Right ventricle myocardium superior (tissue), 1 donor: ENCODE measurements at regions of chr4 and their contacts with region 1.

Region 1: DNA sequence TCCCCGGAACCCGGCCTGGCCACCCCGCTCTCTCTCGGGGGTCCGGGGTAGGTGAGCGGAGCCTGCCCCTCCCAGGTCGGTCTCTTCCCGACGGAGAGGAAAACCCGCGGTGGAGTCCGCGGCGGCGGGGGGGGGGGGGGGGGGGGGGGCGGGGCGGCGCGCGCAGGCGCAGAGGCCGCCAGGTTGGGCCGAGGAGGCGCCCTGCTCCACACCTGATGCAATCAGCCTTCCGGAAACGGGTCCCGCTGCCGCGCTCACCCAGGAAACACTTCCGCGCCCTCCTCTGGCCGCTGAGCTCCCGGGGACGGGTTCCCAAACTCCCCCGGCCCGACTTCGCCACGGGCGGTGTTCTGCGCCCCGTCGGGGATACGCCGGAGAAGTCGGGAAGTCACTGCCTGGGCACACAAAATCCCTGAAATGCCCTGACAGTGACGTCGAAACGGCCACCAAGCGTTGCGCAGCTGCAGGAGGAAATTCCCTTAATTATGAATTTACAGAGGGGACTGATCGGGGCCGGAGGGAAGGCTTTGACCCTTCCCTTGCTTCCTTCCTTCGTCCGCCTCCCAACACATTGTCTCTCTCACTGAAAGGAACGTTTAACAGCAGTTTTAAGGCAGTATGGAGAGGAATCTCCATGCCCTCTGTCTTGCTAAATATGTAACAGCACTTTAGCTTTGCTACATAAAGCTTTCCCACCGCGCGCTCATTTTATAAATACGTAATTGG is 2.1 kb upstream of the APBB2 start:
- DNase-seq: peak; percentile 79
- ATAC-seq: peak; percentile 54

Region 2: DNA sequence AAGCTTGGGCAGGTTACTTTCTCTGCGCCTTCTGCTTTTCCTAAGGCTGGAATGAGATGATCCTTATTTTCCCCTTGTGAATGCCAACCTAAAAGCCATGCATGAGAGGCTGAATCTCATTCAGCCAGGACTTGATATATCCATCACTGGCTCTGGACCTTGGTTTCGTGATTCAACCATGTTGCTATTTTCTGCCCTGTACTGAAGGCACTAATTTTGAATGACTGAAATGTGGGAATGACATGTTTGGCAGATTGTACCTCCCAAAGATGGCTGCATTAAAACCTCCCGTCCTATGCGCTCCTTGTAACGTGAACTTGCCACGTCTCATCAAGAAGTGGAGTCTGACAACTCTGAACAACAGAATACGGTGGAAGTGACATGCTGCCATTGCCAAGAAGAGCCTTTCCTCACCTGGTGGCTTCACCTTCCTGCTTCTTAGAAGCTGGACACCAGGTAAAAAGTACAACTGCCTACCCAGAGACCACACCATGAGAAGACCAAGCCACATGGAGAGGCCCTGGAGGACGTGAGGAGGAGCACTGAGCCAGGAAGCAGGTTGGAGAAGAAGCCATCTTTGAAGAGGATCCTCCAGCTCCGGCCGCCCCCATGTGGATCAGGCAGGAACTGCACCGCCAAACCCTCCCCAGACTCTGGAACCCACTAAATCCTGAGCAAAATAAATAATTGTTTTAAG is 292.2 kb before region 1 on chr4:
- intact Hi-C with region 1: loop called (anchors 5 kb)
- DNase-seq: peak; percentile 74
- ATAC-seq: peak; percentile 71

Region 3: DNA sequence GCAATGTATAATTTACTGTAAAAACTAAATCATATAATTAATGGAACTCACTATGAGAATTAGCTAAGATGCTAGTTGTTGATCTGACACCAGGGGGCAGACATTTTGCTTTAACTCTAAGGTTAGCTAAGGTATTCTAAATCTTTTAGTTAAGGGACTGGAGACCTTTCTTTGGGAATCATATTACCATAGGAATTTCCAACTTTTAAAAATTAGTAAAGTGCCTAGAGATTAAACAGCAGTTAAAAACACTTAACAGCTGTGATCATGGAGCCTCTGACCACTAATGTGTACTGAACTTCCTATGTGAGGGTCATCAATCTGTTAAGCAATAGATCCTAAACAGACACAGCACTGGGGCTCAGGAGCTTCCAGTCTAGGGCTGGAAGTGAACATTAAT is 240.1 kb before region 1 on chr4:
- intact Hi-C with region 1: loop called (anchors 2 kb)
- DNase-seq: no peak
- ATAC-seq: peak; percentile 72